ENCODE measurements at regions of chr20 and their contacts with region 1.

Region 1: GRCh38 chr20:53708129-53708968 is 114.7 kb upstream of the ZNF217 start:
- DNase-seq: peak in 7 of 9 donors; percentile 15 to 52 (median 18)
- ATAC-seq: peak; percentile 62
- H3K4me3 ChIP-seq: no peak overlapping the region
- H3K4me3 Mint-ChIP-seq: peak overlapping the region; percentile 61 to 88 (median 77)
- H3K27ac ChIP-seq: peak overlapping the region; percentile 58
- H3K27ac Mint-ChIP-seq: peak overlapping the region; percentile 91 to 100 (median 96)
- H3K4me1 ChIP-seq: peaks cover 22 to 42% of the 10 kb centered on the region in 2 donors
- H3K4me1 Mint-ChIP-seq: peaks cover 29 to 59% (median 57%) of the 10 kb centered on the region in 7 donors
- H3K27me3 ChIP-seq: no peaks in the 10 kb centered on the region
- H3K27me3 Mint-ChIP-seq: no peaks in the 10 kb centered on the region

Region 2: DNA sequence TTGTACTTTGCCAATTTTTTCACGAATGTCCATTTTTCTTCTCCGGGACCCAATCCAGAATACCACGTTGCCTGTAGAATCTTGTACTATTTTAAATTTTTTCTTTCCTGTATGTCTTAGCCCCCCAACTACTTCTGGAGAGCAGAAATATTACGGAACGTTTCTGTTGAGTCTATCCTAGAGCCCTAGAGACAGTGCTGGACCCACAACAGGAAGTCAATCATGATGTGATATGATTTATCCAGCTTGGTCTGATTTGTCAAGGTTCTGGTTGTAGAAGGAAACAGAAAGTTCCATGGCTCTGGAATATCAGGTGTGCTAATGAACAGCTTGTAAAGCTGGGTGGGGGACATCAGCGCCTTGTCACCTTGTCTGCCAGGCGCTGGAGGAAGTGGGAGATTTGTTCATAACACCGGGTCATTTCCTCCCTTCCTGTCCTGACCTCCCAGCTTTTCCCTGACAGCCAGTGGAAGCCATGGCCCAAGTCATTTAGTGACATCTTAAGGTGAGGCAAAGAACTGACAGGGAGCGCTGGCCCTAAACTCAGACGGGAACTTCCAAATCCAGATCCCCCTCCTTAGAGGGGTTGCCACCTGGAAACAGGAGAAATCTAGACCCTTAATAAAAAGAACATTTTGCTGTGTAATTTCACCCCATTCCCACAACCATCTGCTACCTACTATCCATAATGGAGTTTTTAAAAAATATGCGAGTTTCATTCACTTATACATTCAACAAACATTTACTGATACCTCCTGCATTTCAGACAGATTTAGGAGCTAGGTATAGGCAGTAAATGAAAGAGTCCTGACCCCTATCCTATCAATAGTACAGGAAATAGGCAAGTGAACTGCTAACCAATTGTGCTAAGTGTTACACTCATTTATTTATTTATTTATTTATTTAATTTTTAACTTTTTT is 1647.3 kb before region 1 on chr20:
- CTCF ChIA-PET with region 1: no interaction called
- POLR2A ChIA-PET with region 1: no interaction called
- intact Hi-C with region 1: no loop called
- DNase-seq: no peak
- ATAC-seq: no peak
- H3K4me3 ChIP-seq: no peak overlapping the region
- H3K4me3 Mint-ChIP-seq: no peak overlapping the region
- H3K27ac ChIP-seq: no peak overlapping the region
- H3K27ac Mint-ChIP-seq: no peak overlapping the region
- H3K4me1 ChIP-seq: no peaks in the 10 kb centered on the region
- H3K4me1 Mint-ChIP-seq: no peaks in the 10 kb centered on the region
- H3K27me3 ChIP-seq: no peaks in the 10 kb centered on the region
- H3K27me3 Mint-ChIP-seq: peaks cover 0 to 8% (median 0%) of the 10 kb centered on the region in 5 donors

Region 3: GRCh38 chr20:53379014-53379832 is 329.1 kb before region 1 on chr20:
- CTCF ChIA-PET with region 1: no interaction called
- POLR2A ChIA-PET with region 1: no interaction called
- intact Hi-C with region 1: no loop called
- DNase-seq: no peak
- ATAC-seq: no peak
- H3K4me3 ChIP-seq: no peak overlapping the region
- H3K4me3 Mint-ChIP-seq: no peak overlapping the region
- H3K27ac ChIP-seq: no peak overlapping the region
- H3K27ac Mint-ChIP-seq: no peak overlapping the region
- H3K4me1 ChIP-seq: no peaks in the 10 kb centered on the region
- H3K4me1 Mint-ChIP-seq: peaks cover 0 to 5% (median 0%) of the 10 kb centered on the region in 7 donors
- H3K27me3 ChIP-seq: no peaks in the 10 kb centered on the region
- H3K27me3 Mint-ChIP-seq: no peaks in the 10 kb centered on the region

Region 4: DNA sequence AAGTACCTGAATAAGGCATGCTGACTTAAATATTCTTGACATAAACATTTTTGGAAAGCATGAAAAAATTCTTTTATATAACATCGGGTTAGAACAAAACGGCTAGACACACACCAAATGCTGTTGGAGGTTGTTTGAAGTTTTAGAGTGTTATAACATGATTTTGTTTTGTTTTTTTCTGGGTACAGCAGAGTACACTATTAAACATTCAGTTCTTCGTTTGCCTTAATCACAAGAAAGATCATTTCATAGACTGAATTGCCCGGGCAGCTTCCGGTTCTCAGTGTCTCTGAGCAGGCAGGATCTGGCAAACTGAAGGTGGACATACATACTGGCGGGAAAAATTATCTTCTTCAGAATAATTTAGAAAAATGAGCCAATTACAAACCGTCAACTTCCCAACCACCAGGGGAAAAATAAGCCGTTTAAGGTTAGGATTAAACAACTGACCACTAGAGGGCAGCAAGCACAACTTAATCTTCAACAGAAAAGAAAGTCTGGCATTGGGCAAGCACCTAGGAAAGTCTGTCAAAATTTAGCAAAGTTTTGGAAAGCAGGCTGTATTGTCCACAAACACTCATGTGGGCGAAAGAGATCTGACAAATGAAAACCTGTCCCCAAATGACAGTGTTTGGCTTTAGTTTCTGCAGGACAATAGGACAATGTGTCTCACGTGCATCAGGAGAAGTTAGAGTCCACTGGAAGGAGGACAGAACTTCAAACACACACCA is 129.7 kb before region 1 on chr20:
- CTCF ChIA-PET with region 1: interaction called, 4 read pairs
- POLR2A ChIA-PET with region 1: interaction called, 7 read pairs
- intact Hi-C with region 1: loop called in 1 of 2 experiments (anchors 1 kb)
- DNase-seq: peak in 8 of 9 donors; percentile 44 to 85 (median 80)
- ATAC-seq: peak; percentile 85
- H3K4me3 ChIP-seq: peak overlapping the region; percentile 49
- H3K4me3 Mint-ChIP-seq: peak overlapping the region; percentile 79 to 98 (median 86)
- H3K27ac ChIP-seq: peak overlapping the region; percentile 70
- H3K27ac Mint-ChIP-seq: peak overlapping the region; percentile 83 to 98 (median 94)
- H3K4me1 ChIP-seq: peaks cover 53 to 60% of the 10 kb centered on the region in 2 donors
- H3K4me1 Mint-ChIP-seq: peaks cover 41 to 99% (median 91%) of the 10 kb centered on the region in 7 donors
- H3K27me3 ChIP-seq: no peaks in the 10 kb centered on the region
- H3K27me3 Mint-ChIP-seq: no peaks in the 10 kb centered on the region

Region 5: DNA sequence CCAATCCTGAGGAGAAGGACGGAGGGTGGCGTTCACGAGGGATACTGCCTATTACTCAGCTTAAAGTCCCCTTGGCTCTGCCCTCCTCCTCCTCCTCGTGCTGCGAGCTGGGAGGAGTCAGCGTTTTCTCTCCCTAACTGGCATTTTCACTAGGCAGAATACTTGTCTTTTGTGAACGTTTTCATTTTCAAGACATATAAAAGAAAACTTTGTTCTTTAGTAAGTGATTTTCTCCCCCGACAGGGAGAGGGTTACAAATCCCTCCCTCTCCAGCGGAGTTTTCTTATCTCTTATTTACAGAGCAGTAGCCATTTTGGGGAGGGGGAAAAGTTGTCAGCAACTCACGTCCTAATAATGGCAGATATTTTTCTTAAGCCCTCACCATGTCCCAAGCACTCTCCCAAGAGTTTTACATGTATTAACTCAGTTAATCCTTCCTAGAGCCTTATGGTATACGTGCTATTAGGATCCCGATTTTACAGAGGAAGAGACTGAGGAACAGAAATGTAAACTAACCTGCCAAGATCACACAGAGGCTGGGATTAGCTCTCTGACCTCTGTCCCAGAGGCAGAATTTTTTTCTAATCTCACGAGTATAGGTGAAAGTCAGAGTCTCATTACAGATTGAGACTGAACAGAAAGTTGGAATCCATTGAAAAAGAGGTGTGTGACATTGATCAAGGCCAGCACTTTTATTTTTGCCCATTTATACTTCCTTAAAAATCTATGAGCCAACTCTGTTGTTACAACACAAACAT is 84.7 kb before region 1 on chr20:
- CTCF ChIA-PET with region 1: interaction called, 6 read pairs
- POLR2A ChIA-PET with region 1: interaction called, 10 read pairs
- intact Hi-C with region 1: loop called in 1 of 2 experiments (anchors 1 kb)
- DNase-seq: peak in 4 of 9 donors; percentile 28 to 44 (median 31)
- ATAC-seq: peak; percentile 83
- H3K4me3 ChIP-seq: peak overlapping the region; percentile 56
- H3K4me3 Mint-ChIP-seq: peak overlapping the region; percentile 78 to 92 (median 87)
- H3K27ac ChIP-seq: peak overlapping the region; percentile 74
- H3K27ac Mint-ChIP-seq: peak overlapping the region; percentile 91 to 98 (median 97)
- H3K4me1 ChIP-seq: peaks cover 31 to 32% of the 10 kb centered on the region in 2 donors
- H3K4me1 Mint-ChIP-seq: peaks cover 17 to 53% (median 44%) of the 10 kb centered on the region in 7 donors
- H3K27me3 ChIP-seq: no peaks in the 10 kb centered on the region
- H3K27me3 Mint-ChIP-seq: no peaks in the 10 kb centered on the region

Region 6: DNA sequence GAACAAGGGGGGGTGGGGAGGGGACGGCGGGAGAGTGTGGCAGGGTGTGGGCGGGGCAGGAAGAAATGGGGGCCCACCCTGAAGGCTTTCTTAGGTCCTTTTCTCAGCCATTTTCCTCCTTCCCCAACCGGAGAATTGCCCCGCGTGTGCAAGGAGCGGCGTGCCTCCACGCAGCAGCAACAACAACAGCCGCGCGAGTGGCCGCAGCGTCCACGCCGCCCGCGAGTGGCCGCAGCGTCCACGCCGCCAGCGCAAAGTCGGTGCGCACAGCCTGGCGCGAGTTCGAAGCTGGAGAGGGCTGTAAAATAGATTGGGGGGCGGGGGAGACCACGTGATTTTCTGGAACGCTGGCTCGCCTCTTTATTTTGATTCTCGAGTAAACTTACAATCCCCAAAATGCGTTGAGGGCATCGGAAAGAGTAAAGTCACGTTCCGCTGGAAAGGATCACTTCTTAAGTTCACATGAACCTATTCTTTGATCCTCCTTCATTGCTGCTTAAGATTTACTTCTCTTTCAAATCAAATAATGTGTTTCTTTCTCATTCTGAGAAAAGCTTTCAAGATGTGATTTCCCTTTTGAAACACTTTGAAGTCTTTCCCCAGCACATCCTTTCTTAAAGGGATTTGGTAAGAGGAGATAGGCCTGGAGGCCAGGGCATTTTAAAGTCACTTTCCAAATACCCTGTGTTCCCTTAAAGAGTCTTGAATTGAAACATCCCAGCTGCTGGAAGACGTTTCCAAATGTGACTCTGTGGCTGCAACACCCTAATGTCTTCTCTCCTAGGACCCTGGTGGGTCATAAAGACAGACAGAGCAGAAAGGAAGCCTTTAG is 48.1 kb before region 1 on chr20:
- CTCF ChIA-PET with region 1: interaction called, 4 read pairs
- POLR2A ChIA-PET with region 1: interaction called, 6 read pairs
- intact Hi-C with region 1: loop called (anchors 1 kb)
- DNase-seq: peak; percentile 11 to 54 (median 39)
- ATAC-seq: peak; percentile 36
- H3K4me3 ChIP-seq: peak overlapping the region; percentile 71
- H3K4me3 Mint-ChIP-seq: peak overlapping the region; percentile 69 to 92 (median 86)
- H3K27ac ChIP-seq: peak overlapping the region; percentile 74
- H3K27ac Mint-ChIP-seq: peak overlapping the region; percentile 79 to 96 (median 92)
- H3K4me1 ChIP-seq: peaks cover 12 to 32% of the 10 kb centered on the region in 2 donors
- H3K4me1 Mint-ChIP-seq: peaks cover 40 to 79% (median 70%) of the 10 kb centered on the region in 7 donors
- H3K27me3 ChIP-seq: no peaks in the 10 kb centered on the region
- H3K27me3 Mint-ChIP-seq: no peaks in the 10 kb centered on the region

Region 7: DNA sequence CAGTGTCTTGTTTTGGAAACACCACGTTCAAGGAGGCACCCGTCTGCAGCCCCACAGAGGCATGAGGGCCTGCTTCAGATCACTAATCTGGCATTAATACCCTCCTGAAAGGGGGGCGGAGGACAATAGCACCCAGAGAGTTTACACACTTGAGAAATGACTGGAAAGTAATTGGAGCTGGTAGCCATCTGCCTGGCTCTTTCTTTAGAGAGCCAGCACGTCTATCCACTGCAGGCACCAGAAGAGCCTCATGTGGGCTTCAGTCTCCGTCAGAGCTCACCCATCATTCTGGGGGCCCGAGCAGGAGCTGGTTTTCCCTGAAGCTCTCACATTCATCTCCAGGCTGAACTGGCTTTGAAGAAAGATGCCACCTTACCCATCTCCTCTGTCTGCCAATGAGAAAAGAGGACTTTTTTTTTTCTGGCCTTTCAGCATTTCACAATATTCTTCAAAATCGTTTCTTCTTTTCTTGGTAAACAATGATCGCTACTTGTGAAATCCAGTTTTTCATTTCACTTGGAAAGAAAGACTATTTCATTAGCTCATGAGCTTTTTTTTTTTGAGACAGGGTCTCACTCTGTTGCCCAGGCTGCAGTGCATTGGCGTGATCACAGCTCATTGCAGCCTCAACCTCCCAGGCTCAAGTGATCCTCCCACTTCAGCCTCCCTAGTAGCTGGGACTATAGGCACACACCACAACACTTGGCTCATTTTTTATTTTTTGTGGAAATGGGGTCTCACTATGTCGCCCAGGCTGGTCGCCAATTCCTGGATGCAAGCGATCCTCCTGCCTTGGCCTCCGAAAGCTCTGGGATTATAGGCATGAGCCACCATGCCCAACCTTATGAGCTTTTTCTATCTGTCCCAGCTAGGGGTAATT is 10.0 kb after region 1 on chr20:
- CTCF ChIA-PET with region 1: no interaction called
- POLR2A ChIA-PET with region 1: interaction called, 11 read pairs
- intact Hi-C with region 1: loop called (anchors 1 to 2 kb)
- DNase-seq: no peak
- ATAC-seq: no peak
- H3K4me3 ChIP-seq: no peak overlapping the region
- H3K4me3 Mint-ChIP-seq: no peak overlapping the region
- H3K27ac ChIP-seq: no peak overlapping the region
- H3K27ac Mint-ChIP-seq: peak overlapping the region in 1 of 9 donors; percentile 2
- H3K4me1 ChIP-seq: peaks cover 0 to 3% of the 10 kb centered on the region in 2 donors
- H3K4me1 Mint-ChIP-seq: peaks cover 9 to 25% (median 13%) of the 10 kb centered on the region in 7 donors
- H3K27me3 ChIP-seq: no peaks in the 10 kb centered on the region
- H3K27me3 Mint-ChIP-seq: no peaks in the 10 kb centered on the region

Region 8: GRCh38 chr20:53847129-53847836 is 138.9 kb after region 1 on chr20:
- CTCF ChIA-PET with region 1: interaction called, 3 read pairs
- POLR2A ChIA-PET with region 1: interaction called, 3 read pairs
- intact Hi-C with region 1: loop called (anchors 2 to 5 kb)
- DNase-seq: peak in 5 of 9 donors; percentile 31 to 57 (median 47)
- ATAC-seq: peak; percentile 72
- H3K4me3 ChIP-seq: no peak overlapping the region
- H3K4me3 Mint-ChIP-seq: peak overlapping the region; percentile 58 to 89 (median 78)
- H3K27ac ChIP-seq: peak overlapping the region; percentile 1
- H3K27ac Mint-ChIP-seq: peak overlapping the region; percentile 58 to 94 (median 88)
- H3K4me1 ChIP-seq: peaks cover 47 to 61% of the 10 kb centered on the region in 2 donors
- H3K4me1 Mint-ChIP-seq: peaks cover 43 to 77% (median 58%) of the 10 kb centered on the region in 7 donors
- H3K27me3 ChIP-seq: no peaks in the 10 kb centered on the region
- H3K27me3 Mint-ChIP-seq: no peaks in the 10 kb centered on the region

Measured in naive thymus-derived CD4-positive, alpha-beta T cell (primary cell).